ENCODE measurements at regions of chr11 and their contacts with region 1.

Region 1: GRCh38 chr11:45964911-45965389 is 42.5 kb downstream of the LARGE2 start:
- DNase-seq: peak; percentile 24
- ATAC-seq: peak; percentile 99
- H3K4me3 Mint-ChIP-seq: no peak overlapping the region
- H3K27ac Mint-ChIP-seq: no peak overlapping the region
- H3K4me1 Mint-ChIP-seq: no peaks in the 10 kb centered on the region
- H3K27me3 Mint-ChIP-seq: no peaks in the 10 kb centered on the region
- CTCF ChIP-seq: peak; percentile 23

Region 2: DNA sequence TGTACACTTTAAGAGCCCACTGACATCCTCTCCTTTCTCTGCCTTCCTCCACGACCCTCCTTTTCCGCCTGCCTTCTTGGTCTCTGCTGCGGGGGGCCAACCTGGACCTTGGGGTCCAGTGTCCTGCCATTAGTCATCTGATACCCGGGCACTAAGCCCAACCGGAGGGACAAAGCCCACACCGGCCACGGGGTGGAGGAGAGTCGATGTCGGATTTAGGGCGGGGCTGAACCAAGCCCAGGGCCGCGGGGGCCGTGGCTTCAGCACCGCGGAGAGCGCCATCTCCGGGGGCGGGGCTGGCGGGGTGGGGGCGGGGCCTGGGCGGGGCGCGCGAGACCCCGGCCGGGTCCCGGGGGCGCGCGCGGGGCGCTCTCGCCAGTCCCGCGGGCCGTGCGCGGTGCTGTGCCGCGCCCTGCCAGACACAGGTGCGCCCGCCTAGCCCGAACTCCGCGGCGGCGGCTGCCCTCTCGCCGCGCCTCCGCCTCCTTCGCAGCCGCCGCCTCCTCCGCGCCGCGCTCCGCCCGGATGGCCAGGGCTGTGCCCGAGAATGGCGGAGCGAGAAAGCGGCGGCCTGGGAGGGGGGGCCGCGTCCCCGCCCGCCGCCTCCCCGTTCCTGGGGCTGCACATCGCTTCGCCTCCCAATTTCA is 79.6 kb before region 1 on chr11 and contains the start of gene MAPK8IP1:
- CTCF ChIA-PET with region 1: no interaction called
- POLR2A ChIA-PET with region 1: no interaction called
- intact Hi-C with region 1: loop called (anchors 5 kb)
- DNase-seq: peak; percentile 61
- ATAC-seq: peak; percentile 88
- H3K4me3 Mint-ChIP-seq: peak within 1 kb of the TSS; percentile 80
- H3K27ac Mint-ChIP-seq: no peak within 1 kb of the TSS
- H3K4me1 Mint-ChIP-seq: peaks cover 10% of the 10 kb centered on the region
- H3K27me3 Mint-ChIP-seq: no peaks in the 10 kb centered on the region
- CTCF ChIP-seq: no peak
- total RNA-seq, gene MAPK8IP1: 1.9 and 3.4 TPM in 2 replicates

Region 3: GRCh38 chr11:45939836-45940235 is 25.1 kb before region 1 on chr11:
- CTCF ChIA-PET with region 1: interaction called, 14 read pairs
- POLR2A ChIA-PET with region 1: interaction called, 9 read pairs
- intact Hi-C with region 1: no loop called
- DNase-seq: no peak
- ATAC-seq: no peak
- H3K4me3 Mint-ChIP-seq: no peak overlapping the region
- H3K27ac Mint-ChIP-seq: peak overlapping the region; percentile 88
- H3K4me1 Mint-ChIP-seq: peaks cover 60% of the 10 kb centered on the region
- H3K27me3 Mint-ChIP-seq: no peaks in the 10 kb centered on the region
- CTCF ChIP-seq: no peak

Region 4: GRCh38 chr11:45982656-45983470 is 17.9 kb after region 1 on chr11:
- CTCF ChIA-PET with region 1: interaction called, 11 read pairs
- POLR2A ChIA-PET with region 1: no interaction called
- intact Hi-C with region 1: no loop called
- DNase-seq: no peak
- ATAC-seq: no peak
- H3K4me3 Mint-ChIP-seq: no peak overlapping the region
- H3K27ac Mint-ChIP-seq: no peak overlapping the region
- H3K4me1 Mint-ChIP-seq: peaks cover 2% of the 10 kb centered on the region
- H3K27me3 Mint-ChIP-seq: no peaks in the 10 kb centered on the region
- CTCF ChIP-seq: no peak

Region 5: GRCh38 chr11:45993531-45994001 is 28.6 kb after region 1 on chr11:
- CTCF ChIA-PET with region 1: no interaction called
- POLR2A ChIA-PET with region 1: no interaction called
- intact Hi-C with region 1: no loop called
- DNase-seq: no peak
- ATAC-seq: no peak
- H3K4me3 Mint-ChIP-seq: no peak overlapping the region
- H3K27ac Mint-ChIP-seq: no peak overlapping the region
- H3K4me1 Mint-ChIP-seq: peaks cover 22% of the 10 kb centered on the region
- H3K27me3 Mint-ChIP-seq: no peaks in the 10 kb centered on the region
- CTCF ChIP-seq: no peak

Region 6: GRCh38 chr11:46315033-46315738 is 350.2 kb after region 1 on chr11:
- CTCF ChIA-PET with region 1: no interaction called
- POLR2A ChIA-PET with region 1: no interaction called
- intact Hi-C with region 1: loop called (anchors 1 kb)
- DNase-seq: peak; percentile 48
- ATAC-seq: peak; percentile 67
- H3K4me3 Mint-ChIP-seq: no peak overlapping the region
- H3K27ac Mint-ChIP-seq: no peak overlapping the region
- H3K4me1 Mint-ChIP-seq: peaks cover 15% of the 10 kb centered on the region
- H3K27me3 Mint-ChIP-seq: peaks cover 11% of the 10 kb centered on the region
- CTCF ChIP-seq: peak; percentile 82